Activated B cell treated with CpG ODN at 0.5 μM for 24 hours (primary cell): ENCODE measurements at regions of chr1 and their contacts with region 1.

Region 1: DNA sequence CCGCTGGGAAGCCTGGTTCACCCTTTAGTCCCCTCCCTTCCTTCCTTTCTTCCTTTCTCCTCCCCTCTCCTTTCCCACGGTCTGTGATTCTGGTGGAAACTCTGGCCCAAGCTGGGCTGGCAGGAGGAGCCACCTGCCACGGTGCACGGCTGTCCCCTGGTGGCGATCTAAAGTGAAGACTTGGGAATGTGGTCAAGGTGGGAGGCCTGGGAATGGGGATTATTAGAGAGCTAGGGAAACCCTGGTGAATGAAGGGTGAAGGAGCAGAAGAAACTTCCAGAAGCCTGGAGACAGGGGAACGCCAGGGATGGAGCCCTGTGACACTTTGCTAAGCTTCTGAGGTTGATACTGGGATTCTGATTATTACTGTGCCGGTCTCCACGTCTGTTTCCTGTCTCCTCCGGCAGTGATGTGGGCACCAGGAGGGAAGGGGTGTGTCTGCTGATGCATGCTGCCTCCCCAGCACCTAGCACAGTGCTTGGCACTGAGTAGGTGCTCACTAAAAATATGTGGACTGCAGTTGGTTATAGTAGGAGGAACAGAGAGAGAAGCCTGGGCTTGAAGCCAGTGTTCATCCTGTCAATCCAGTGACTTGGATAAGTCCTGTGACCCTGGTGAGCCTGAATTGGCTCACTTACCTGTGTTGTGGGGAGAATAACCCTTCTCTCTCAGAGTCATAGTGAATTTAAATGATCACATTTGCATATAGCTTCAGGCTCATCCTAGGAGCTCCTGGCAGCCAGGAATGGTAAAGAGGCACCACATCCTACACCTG is 71.2 kb upstream of the NBPF3 start:
- DNase-seq: peak; percentile 52
- ATAC-seq: peak; percentile 45
- H3K4me3 Mint-ChIP-seq: no peak overlapping the region
- H3K27ac Mint-ChIP-seq: no peak overlapping the region
- H3K4me1 Mint-ChIP-seq: peaks cover 26% of the 10 kb centered on the region
- H3K27me3 Mint-ChIP-seq: no peaks in the 10 kb centered on the region
- CTCF ChIP-seq: peak; percentile 57

Region 2: DNA sequence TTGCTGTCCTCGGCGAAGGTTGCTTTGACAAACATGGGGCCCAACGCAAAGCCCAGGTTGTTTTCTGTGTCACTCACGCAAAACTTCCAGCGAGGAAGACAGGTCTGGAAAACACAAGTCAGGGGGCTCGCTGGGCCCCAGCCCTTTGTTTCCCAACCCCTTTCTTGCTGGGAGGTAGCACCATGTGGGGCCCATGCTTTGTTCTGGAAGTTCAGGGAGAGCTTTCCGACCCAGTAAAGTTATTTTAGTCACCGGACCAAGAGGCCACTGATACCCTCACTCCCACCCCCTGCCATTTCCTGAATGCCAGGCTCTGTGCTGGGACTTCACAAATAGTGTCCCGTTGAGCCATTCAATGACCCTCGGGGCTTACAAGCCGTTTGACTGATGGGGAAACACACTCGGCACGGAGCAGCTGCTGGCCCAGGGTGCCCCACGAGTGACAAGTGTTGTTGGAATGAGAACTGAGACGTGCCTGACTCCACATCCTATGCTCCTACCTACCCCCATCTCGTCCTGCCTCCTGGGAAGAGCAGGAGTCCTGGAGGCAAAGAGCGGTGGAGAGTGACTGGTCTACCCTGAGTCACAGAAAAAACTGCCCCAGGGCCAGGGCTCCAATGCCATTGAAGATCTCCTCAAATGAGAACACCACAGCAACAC is 130.4 kb before region 1 on chr1:
- CTCF ChIA-PET with region 1: interaction called, 105 read pairs
- POLR2A ChIA-PET with region 1: interaction called, 7 read pairs
- intact Hi-C with region 1: no loop called
- DNase-seq: no peak
- ATAC-seq: no peak
- H3K4me3 Mint-ChIP-seq: no peak overlapping the region
- H3K27ac Mint-ChIP-seq: no peak overlapping the region
- H3K4me1 Mint-ChIP-seq: no peaks in the 10 kb centered on the region
- H3K27me3 Mint-ChIP-seq: no peaks in the 10 kb centered on the region
- CTCF ChIP-seq: no peak

Region 3: GRCh38 chr1:21261551-21262281 is 107.0 kb before region 1 on chr1:
- CTCF ChIA-PET with region 1: interaction called, 247 read pairs
- POLR2A ChIA-PET with region 1: interaction called, 4 read pairs
- intact Hi-C with region 1: no loop called
- DNase-seq: no peak
- ATAC-seq: peak; percentile 58
- H3K4me3 Mint-ChIP-seq: no peak overlapping the region
- H3K27ac Mint-ChIP-seq: peak overlapping the region; percentile 76
- H3K4me1 Mint-ChIP-seq: peaks cover 21% of the 10 kb centered on the region
- H3K27me3 Mint-ChIP-seq: no peaks in the 10 kb centered on the region
- CTCF ChIP-seq: no peak

Region 4: DNA sequence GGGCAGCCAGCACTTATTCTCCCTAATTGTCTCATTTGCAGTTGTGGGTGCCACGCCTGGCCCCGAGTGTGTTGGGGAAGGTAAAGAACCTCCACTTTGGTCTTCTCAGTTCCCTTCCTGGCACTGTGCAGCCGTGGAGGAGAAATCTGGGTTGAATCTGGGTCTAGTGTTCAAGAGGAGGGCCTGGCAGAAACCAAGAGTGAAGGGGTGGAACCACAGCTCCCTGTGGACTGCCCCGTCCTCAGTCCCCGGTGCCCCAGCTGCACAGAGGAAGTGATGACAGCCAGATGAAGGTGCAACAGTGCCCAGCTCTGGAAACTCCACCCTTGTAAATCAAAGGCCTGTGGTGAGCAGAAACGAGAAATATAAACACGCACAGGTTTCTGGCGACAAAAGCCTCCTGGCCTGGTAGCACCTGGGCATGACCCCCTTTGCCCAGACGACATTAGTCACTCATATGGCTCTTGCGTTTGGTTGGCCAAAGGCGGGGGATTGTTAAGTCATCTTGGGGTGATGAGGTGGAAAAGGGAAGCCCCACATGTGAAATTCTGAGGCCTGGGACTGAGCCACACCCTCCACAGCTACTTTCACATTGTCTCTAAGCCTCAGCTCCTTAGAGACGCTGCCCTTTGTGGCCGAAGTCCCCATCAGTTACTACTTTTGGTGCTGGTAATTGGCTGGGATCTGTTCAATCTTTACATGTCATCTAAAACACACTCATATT is 74.3 kb before region 1 on chr1:
- CTCF ChIA-PET with region 1: interaction called, 9 read pairs
- POLR2A ChIA-PET with region 1: interaction called, 86 read pairs
- intact Hi-C with region 1: loop called (anchors 1 kb)
- DNase-seq: peak; percentile 79
- ATAC-seq: peak; percentile 67
- H3K4me3 Mint-ChIP-seq: peak overlapping the region; percentile 90
- H3K27ac Mint-ChIP-seq: peak overlapping the region; percentile 98
- H3K4me1 Mint-ChIP-seq: peaks cover 89% of the 10 kb centered on the region
- H3K27me3 Mint-ChIP-seq: no peaks in the 10 kb centered on the region
- CTCF ChIP-seq: no peak

Region 5: GRCh38 chr1:21344750-21345443 is 23.8 kb before region 1 on chr1:
- CTCF ChIA-PET with region 1: interaction called, 5 read pairs
- POLR2A ChIA-PET with region 1: interaction called, 4 read pairs
- intact Hi-C with region 1: loop called (anchors 2 kb)
- DNase-seq: peak; percentile 36
- ATAC-seq: peak; percentile 22
- H3K4me3 Mint-ChIP-seq: peak overlapping the region; percentile 92
- H3K27ac Mint-ChIP-seq: peak overlapping the region; percentile 77
- H3K4me1 Mint-ChIP-seq: peaks cover 43% of the 10 kb centered on the region
- H3K27me3 Mint-ChIP-seq: no peaks in the 10 kb centered on the region
- CTCF ChIP-seq: no peak

Region 6: DNA sequence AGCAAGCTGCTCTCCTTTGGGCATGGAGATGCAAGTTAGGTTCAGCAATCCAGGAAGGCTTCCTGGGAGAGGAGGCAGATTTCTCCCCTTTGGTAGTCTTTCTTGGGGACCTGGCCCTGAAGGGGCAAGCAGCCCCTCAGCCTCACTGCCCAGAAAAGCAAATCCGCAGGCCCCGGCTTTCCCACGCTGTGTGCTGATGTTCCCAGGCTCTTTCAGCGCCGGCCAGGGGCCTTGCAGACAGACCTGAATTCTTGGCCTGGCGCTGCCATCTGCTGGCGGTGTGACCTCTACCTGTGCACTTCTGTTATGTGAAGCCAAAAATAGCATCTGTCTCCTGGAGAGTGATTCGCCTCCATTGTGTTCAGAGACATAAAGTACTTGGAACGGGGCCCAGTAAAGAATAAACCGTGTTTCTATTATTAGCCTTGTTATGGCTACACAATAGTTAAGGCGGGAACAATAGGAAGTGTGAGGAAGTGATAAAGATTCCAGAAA is 205.3 kb after region 1 on chr1:
- CTCF ChIA-PET with region 1: interaction called, 3 read pairs
- POLR2A ChIA-PET with region 1: no interaction called
- intact Hi-C with region 1: loop called (anchors 1 kb)
- DNase-seq: no peak
- ATAC-seq: peak; percentile 52
- H3K4me3 Mint-ChIP-seq: no peak overlapping the region
- H3K27ac Mint-ChIP-seq: no peak overlapping the region
- H3K4me1 Mint-ChIP-seq: no peaks in the 10 kb centered on the region
- H3K27me3 Mint-ChIP-seq: peaks cover 8% of the 10 kb centered on the region
- CTCF ChIP-seq: no peak